ENCODE measurements at regions of chr2 and their contacts with region 1.

Region 1: GRCh38 chr2:86368161-86368824 is 30.9 kb upstream of the REEP1 start:
- DNase-seq: peak; percentile 55
- ATAC-seq: peak; percentile 60

Region 2: GRCh38 chr2:86221066-86221684 is 147.1 kb before region 1 on chr2:
- intact Hi-C with region 1: loop called (anchors 10 kb)
- DNase-seq: no peak
- ATAC-seq: no peak

Region 3: GRCh38 chr2:86298411-86299379 is 69.6 kb before region 1 on chr2:
- intact Hi-C with region 1: loop called (anchors 5 kb)
- DNase-seq: no peak
- ATAC-seq: peak; percentile 80

Measured in Right ventricle myocardium superior (tissue), 1 donor.